ENCODE measurements at regions of chr1 and their contacts with region 1.

Region 1: DNA sequence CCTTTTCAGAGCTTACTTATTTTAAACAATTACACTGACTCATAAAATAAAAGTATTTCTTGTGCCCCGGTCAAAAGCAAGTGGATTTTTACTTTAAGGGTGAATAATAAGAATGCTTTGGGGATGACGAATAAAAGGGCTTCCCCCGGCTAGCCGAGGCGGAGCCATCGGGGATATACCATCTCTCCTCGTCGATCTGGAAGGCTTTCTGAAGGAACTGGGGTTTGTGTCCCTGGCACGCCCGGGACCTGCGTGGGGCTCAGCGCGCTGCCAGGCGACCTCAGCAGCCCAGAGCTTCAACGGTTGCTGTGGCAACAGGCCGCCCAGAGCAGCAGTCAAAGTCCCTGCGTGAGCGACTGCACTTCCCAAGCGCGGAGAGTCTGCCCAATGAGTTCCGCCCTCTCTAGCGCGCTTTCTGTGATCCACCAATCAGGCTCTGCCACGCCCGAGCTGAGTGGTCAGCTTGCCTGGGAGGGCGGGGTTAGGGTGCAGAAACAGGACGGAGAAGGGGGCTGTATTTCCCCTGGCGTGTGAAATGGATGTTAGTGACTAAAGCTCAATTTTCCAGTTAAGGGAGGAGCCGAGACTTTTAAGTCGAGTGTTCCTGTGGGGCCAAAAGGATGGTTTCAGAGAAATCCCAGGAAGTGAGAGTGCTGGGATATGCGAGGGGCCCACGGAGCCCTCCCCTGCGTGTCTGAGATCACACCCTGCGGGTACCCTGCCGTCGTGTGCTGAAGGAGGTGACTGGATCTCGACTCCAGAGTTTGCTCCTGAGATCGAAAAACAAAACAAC is 33.0 kb upstream of the MGST3 start:
- DNase-seq: peak; percentile 98 to 99 (median 98)
- ATAC-seq: peak; percentile 99
- H3K4me3 ChIP-seq: peak overlapping the region; percentile 47
- H3K27ac ChIP-seq: peak overlapping the region; percentile 67
- H3K4me1 ChIP-seq: peaks cover 3 to 9% of the 10 kb centered on the region in 2 experiments; a peak in 4 of 5 replicates
- H3K27me3 ChIP-seq: 0 out of 5 replicates have a peak, but pooled peaks cover 0 to 4% of the 10 kb centered on the region in 2 experiments
- CTCF ChIP-seq: 0 out of 6 replicates have a peak, but pooled peaks of 1 of the 3 experiments have one; percentile 1
- EP300 ChIP-seq: peak; percentile 6; the same call in 1 of the 2 replicates
- POLR2A ChIP-seq: peak; percentile 67
- RAD21 ChIP-seq: no peak

Region 2: DNA sequence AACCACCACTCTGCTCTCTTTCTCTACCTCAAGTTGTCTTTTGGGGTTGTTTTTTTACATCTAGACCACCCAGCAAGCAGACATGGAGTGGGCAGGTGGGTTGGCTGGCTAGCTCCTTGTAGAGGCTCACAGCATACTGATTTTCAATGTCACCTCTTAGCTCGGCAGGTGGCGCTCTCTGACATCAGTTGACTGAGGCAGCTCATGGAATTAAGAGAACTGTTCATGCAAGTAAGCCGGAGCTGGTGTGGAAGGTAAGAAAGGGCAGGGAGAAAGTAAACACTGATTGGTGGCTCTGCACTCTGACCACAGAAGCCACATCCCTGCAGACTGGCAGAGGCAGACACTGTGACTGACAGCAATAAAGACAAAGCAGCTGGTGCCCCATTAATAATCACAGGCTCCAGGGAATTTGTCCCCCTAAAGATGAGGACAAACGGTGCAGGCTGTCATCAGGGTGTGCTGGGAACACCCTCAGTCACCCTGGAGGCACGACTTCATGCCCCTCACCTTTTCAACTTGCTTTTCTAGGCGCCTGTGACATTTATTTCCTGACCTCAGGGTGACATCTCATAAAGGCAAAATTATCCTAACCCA is 468.4 kb before region 1 on chr1:
- CTCF ChIA-PET with region 1: no interaction called
- POLR2A ChIA-PET with region 1: no interaction called
- in situ Hi-C with region 1: loop called (anchors 25 kb)
- intact Hi-C with region 1: loop called (anchors 5 kb)
- DNase-seq: peak; percentile 27 to 68 (median 45)
- ATAC-seq: peak; percentile 94
- H3K4me3 ChIP-seq: no peak overlapping the region
- H3K27ac ChIP-seq: no peak overlapping the region
- H3K4me1 ChIP-seq: no peaks in the 10 kb centered on the region
- H3K27me3 ChIP-seq: no peaks in the 10 kb centered on the region
- CTCF ChIP-seq: peak; percentile 64 to 79 (median 68)
- EP300 ChIP-seq: no peak
- POLR2A ChIP-seq: no peak
- RAD21 ChIP-seq: peak; percentile 46 to 58

Region 3: DNA sequence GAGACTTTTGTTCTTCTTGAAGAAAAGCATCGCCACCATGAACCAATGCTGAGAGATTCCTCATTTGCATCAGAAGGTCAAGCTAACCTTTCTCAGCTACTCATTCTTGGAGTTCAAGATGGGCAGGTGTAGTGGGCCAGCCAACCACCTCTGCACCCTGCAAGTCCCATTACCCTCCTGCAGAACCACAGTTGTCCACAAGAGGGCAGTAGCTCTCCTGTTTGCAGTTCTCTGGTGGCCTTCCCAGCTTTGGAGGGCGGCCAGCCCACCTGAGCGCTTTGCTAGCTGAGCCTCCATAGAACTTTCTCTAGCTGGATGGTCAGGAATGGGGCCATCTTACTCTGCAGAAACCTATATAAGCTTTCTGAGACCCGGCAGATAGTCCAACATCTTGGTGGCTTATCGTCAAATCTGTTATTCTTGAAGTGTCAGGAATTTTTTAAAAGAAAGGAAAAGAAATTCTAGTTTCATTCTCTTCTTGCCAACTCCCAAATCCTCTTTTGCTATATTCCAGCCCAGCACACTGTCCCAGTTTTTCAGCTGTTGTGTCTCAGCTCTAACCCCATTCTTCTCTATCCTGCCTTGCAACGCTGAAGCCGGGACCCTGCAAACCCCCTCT is 230.6 kb before region 1 on chr1:
- CTCF ChIA-PET with region 1: interaction called, 10 read pairs
- POLR2A ChIA-PET with region 1: no interaction called
- in situ Hi-C with region 1: no loop called
- intact Hi-C with region 1: loop called (anchors 1 kb)
- DNase-seq: peak; percentile 80 to 90 (median 86)
- ATAC-seq: peak; percentile 90
- H3K4me3 ChIP-seq: no peak overlapping the region
- H3K27ac ChIP-seq: no peak overlapping the region
- H3K4me1 ChIP-seq: no peaks in the 10 kb centered on the region
- H3K27me3 ChIP-seq: peaks cover 0 to 6% of the 10 kb centered on the region in 2 experiments; a peak in 1 of 5 replicates
- CTCF ChIP-seq: peak; percentile 76 to 94 (median 80)
- EP300 ChIP-seq: no peak
- POLR2A ChIP-seq: no peak
- RAD21 ChIP-seq: peak; percentile 29 to 45

Region 4: GRCh38 chr1:165610885-165611284 is 12.8 kb after region 1 on chr1:
- CTCF ChIA-PET with region 1: interaction called, 4 read pairs
- POLR2A ChIA-PET with region 1: interaction called, 10 read pairs
- in situ Hi-C with region 1: no loop called
- intact Hi-C with region 1: no loop called
- DNase-seq: no peak
- ATAC-seq: peak; percentile 27; the same call in 2 of the 3 replicates
- H3K4me3 ChIP-seq: no peak overlapping the region
- H3K27ac ChIP-seq: no peak overlapping the region
- H3K4me1 ChIP-seq: no peaks in the 10 kb centered on the region
- H3K27me3 ChIP-seq: no peaks in the 10 kb centered on the region
- CTCF ChIP-seq: no peak
- EP300 ChIP-seq: no peak
- POLR2A ChIP-seq: no peak
- RAD21 ChIP-seq: no peak

Region 5: GRCh38 chr1:165717918-165718515 is 119.9 kb after region 1 on chr1:
- CTCF ChIA-PET with region 1: interaction called, 4 read pairs
- POLR2A ChIA-PET with region 1: interaction called, 3 read pairs
- in situ Hi-C with region 1: no loop called
- intact Hi-C with region 1: loop called (anchors 1 kb)
- DNase-seq: peak; percentile 42 to 77 (median 58)
- ATAC-seq: peak; percentile 91
- H3K4me3 ChIP-seq: no peak overlapping the region
- H3K27ac ChIP-seq: no peak overlapping the region
- H3K4me1 ChIP-seq: no peaks in the 10 kb centered on the region
- H3K27me3 ChIP-seq: no peaks in the 10 kb centered on the region; a peak in 2 of 5 replicates
- CTCF ChIP-seq: peak; percentile 83 to 97 (median 87)
- EP300 ChIP-seq: no peak
- POLR2A ChIP-seq: no peak
- RAD21 ChIP-seq: peak; percentile 97 to 99

Region 6: GRCh38 chr1:165914136-165914798 is 316.2 kb after region 1 on chr1:
- CTCF ChIA-PET with region 1: interaction called, 34 read pairs
- POLR2A ChIA-PET with region 1: interaction called, 4 read pairs
- in situ Hi-C with region 1: loop called (anchors 5 kb)
- intact Hi-C with region 1: loop called (anchors 1 kb)
- DNase-seq: peak; percentile 78 to 83 (median 80)
- ATAC-seq: peak; percentile 87
- H3K4me3 ChIP-seq: no peak overlapping the region
- H3K27ac ChIP-seq: no peak overlapping the region
- H3K4me1 ChIP-seq: no peaks in the 10 kb centered on the region
- H3K27me3 ChIP-seq: no peaks in the 10 kb centered on the region
- CTCF ChIP-seq: peak; percentile 92 to 98 (median 93)
- EP300 ChIP-seq: no peak
- POLR2A ChIP-seq: no peak
- RAD21 ChIP-seq: peak; percentile 99